Caco-2 (cell line): ENCODE measurements at regions of chr7 and their contacts with region 1.

Region 1: DNA sequence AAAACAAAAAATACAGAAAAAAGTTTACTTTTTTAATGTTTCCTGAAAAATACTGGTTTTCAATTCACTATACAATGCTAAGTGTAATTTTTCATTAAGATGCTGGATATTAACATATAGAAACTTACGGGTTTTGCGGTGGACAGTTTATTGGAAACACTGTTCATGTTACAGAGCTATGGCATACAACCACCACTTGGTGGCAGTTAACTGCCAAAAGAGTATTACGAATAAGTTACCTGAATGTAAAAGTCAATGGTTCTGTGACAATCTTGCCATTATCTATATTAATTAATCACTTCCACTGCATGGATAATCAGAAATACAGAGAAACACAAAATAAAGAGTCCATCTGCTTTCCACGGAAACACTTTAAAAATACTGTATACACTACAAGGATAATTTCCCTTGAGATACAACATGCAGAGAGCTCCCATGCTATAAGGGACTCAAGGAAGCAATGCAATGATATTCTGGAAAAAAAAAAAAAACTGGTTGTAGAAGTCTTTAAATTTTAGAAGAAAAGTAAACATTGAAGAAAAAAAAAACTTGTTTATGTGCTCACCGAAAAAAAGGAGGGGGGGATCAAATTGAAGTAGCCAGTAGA is 97.0 kb downstream of the TPK1 start:
- DNase-seq: peak in 1 of 2 experiments; percentile 32
- H3K4me3 ChIP-seq: no peak overlapping the region
- H3K4me3 Mint-ChIP-seq: no peak overlapping the region
- H3K27ac Mint-ChIP-seq: no peak overlapping the region
- H3K4me1 ChIP-seq: peaks cover 4% of the 10 kb centered on the region; the same call in 1 of the 2 replicates
- H3K4me1 Mint-ChIP-seq: peaks cover 27% of the 10 kb centered on the region
- H3K27me3 ChIP-seq: no peaks in the 10 kb centered on the region
- H3K27me3 Mint-ChIP-seq: no peaks in the 10 kb centered on the region
- CTCF ChIP-seq: peak; percentile 63 to 73

Region 2: DNA sequence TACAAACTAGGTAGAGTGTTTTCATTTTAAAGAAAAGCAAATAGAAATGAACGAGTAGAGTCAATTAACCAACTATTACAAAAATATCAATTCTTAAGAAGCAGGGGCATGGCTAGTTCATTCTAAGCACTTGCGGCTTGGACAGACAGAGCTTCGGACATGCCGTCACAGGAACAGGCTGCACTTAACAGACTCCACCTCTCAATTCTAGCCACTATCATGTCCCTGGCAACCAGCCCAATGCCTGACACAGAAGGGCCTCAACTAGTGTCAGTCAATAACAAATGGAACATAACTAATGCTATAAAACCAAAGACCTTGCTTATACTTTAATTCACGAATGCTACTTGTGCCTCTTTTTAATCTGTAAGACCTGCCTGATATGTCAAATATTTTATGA is 22.7 kb after region 1 on chr7:
- CTCF ChIA-PET with region 1: no interaction called
- POLR2A ChIA-PET with region 1: no interaction called
- intact Hi-C with region 1: loop called (anchors 2 kb)
- DNase-seq: no peak
- H3K4me3 ChIP-seq: no peak overlapping the region
- H3K4me3 Mint-ChIP-seq: no peak overlapping the region
- H3K27ac Mint-ChIP-seq: no peak overlapping the region
- H3K4me1 ChIP-seq: no peaks in the 10 kb centered on the region
- H3K4me1 Mint-ChIP-seq: peaks cover 6% of the 10 kb centered on the region
- H3K27me3 ChIP-seq: no peaks in the 10 kb centered on the region
- H3K27me3 Mint-ChIP-seq: no peaks in the 10 kb centered on the region
- CTCF ChIP-seq: no peak

Region 3: DNA sequence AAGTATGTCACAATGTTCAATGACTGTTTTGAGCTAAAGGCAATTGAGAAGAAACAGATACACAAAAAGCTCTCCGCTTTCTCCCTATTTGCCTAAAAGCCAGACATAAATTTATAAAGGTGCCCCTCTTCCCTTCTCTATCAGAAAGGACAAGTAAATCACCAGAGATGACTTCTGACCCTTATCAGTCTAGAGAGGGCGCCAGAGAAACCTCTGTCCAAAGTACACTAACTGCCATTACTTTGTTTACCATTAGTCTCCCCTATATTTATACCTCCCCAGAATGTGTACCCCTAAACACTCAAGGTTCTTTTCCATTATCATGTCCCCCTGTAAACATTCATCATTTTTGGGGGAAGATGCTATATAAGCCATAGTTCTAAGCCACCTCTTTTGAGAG is 47.7 kb after region 1 on chr7:
- CTCF ChIA-PET with region 1: interaction called, 5 read pairs
- POLR2A ChIA-PET with region 1: no interaction called
- intact Hi-C with region 1: loop called (anchors 1 kb)
- DNase-seq: no peak
- H3K4me3 ChIP-seq: no peak overlapping the region
- H3K4me3 Mint-ChIP-seq: no peak overlapping the region
- H3K27ac Mint-ChIP-seq: no peak overlapping the region
- H3K4me1 ChIP-seq: peaks cover 22% of the 10 kb centered on the region
- H3K4me1 Mint-ChIP-seq: peaks cover 6% of the 10 kb centered on the region
- H3K27me3 ChIP-seq: no peaks in the 10 kb centered on the region
- H3K27me3 Mint-ChIP-seq: no peaks in the 10 kb centered on the region
- CTCF ChIP-seq: peak; percentile 6 to 10

Region 4: GRCh38 chr7:144835652-144836544 is 97.1 kb after region 1 on chr7 and contains the start of gene TPK1:
- CTCF ChIA-PET with region 1: interaction called, 15 read pairs
- POLR2A ChIA-PET with region 1: no interaction called
- intact Hi-C with region 1: loop called (anchors 1 kb)
- DNase-seq: peak; percentile 94 to 95
- H3K4me3 ChIP-seq: peak within 1 kb of the TSS; percentile 57
- H3K4me3 Mint-ChIP-seq: peak within 1 kb of the TSS; percentile 98
- H3K27ac Mint-ChIP-seq: peak within 1 kb of the TSS; percentile 96
- H3K4me1 ChIP-seq: peaks cover 45% of the 10 kb centered on the region
- H3K4me1 Mint-ChIP-seq: peaks cover 29% of the 10 kb centered on the region
- H3K27me3 ChIP-seq: no peaks in the 10 kb centered on the region
- H3K27me3 Mint-ChIP-seq: no peaks in the 10 kb centered on the region
- CTCF ChIP-seq: no peak
- total RNA-seq, gene TPK1: 72.0 and 86.6 TPM in 2 replicates